Panc1 (cell line): ENCODE measurements at regions of chr1 and their contacts with region 1.

Region 1: GRCh38 chr1:61453111-61453961 is 271.6 kb downstream of the TM2D1 start:
- DNase-seq: peak; percentile 50
- ATAC-seq: peak; percentile 98
- H3K4me3 ChIP-seq: peak overlapping the region in 1 of 2 experiments; percentile 7; a peak in 1 of 4 replicates
- H3K27ac ChIP-seq: peak overlapping the region; percentile 31; the same call in 1 of the 2 replicates
- H3K4me1 ChIP-seq: peaks cover 11% of the 10 kb centered on the region
- H3K27me3 ChIP-seq: no peaks in the 10 kb centered on the region
- CTCF ChIP-seq: peak; percentile 88

Region 2: DNA sequence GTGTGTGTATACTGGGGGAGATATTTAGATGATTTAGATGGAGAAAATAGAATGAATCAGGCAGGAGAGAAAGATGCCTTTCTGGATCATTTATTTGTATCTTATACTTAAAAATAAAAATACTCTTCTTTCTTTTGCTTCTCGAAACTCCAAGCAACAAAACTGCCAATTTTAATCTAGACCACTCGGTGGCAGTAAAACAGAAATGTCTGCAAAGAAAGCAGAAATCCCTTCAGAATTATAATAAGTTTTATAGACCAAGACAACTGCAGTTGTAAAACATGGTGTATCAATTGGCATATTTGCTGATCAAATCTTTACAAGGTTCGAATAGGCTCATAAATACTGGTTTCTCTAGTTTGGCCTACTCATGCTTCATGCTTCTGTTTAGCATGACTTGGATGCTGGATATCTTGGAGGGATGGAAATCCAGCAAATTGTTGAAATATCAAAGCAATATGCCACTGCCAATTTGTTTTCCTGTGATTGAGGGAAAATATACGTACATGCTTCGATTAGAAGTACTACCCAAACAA is 1364.6 kb before region 1 on chr1:
- CTCF ChIA-PET with region 1: no interaction called
- POLR2A ChIA-PET with region 1: no interaction called
- in situ Hi-C with region 1: no loop called
- intact Hi-C with region 1: no loop called
- DNase-seq: no peak
- ATAC-seq: no peak
- H3K4me3 ChIP-seq: no peak overlapping the region
- H3K27ac ChIP-seq: no peak overlapping the region
- H3K4me1 ChIP-seq: no peaks in the 10 kb centered on the region
- H3K27me3 ChIP-seq: no peaks in the 10 kb centered on the region
- CTCF ChIP-seq: no peak; the same call in 1 of the 2 replicates

Region 3: DNA sequence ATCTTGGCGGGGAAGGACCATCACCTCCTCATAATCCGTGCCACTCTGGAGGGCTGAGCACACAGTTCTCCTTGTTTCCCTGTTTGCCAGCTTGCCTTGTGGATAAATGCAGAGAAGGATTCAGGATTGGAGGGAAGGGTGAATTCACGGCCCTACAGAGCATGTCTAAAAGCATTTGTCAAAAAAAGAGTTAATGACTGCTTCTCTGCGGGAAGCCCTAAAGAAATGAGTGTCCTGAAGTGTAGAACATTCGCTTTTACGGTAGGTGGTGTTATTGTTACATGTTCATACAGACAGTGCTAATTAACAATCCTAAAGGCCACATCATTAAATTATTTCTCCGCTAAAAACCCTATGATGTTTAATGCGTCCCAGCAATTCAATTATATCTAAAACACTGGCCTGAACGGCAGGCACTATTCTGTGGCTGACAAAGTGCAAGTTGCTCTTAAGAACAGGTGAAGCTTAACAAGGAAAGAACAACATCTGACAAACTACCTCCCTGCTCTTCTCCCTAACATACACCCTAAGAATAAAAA is 483.3 kb before region 1 on chr1:
- CTCF ChIA-PET with region 1: no interaction called
- POLR2A ChIA-PET with region 1: no interaction called
- in situ Hi-C with region 1: no loop called
- intact Hi-C with region 1: loop called (anchors 5 kb)
- DNase-seq: peak; percentile 15
- ATAC-seq: peak; percentile 74; the same call in 1 of the 2 replicates
- H3K4me3 ChIP-seq: no peak overlapping the region
- H3K27ac ChIP-seq: no peak overlapping the region
- H3K4me1 ChIP-seq: no peaks in the 10 kb centered on the region; the same call in 1 of the 2 replicates
- H3K27me3 ChIP-seq: peaks cover 6% of the 10 kb centered on the region; the same call in 1 of the 2 replicates
- CTCF ChIP-seq: peak; percentile 51; the same call in 1 of the 2 replicates

Region 4: GRCh38 chr1:61049850-61050540 is 403.3 kb before region 1 on chr1:
- CTCF ChIA-PET with region 1: interaction called, 3 read pairs
- POLR2A ChIA-PET with region 1: no interaction called
- in situ Hi-C with region 1: no loop called
- intact Hi-C with region 1: loop called (anchors 10 kb)
- DNase-seq: peak; percentile 75
- ATAC-seq: peak; percentile 87
- H3K4me3 ChIP-seq: peak overlapping the region; percentile 70 to 76
- H3K27ac ChIP-seq: peak overlapping the region; percentile 77
- H3K4me1 ChIP-seq: peaks cover 25% of the 10 kb centered on the region
- H3K27me3 ChIP-seq: no peaks in the 10 kb centered on the region
- CTCF ChIP-seq: peak; percentile 96

Region 5: GRCh38 chr1:61337981-61338848 is 115.1 kb before region 1 on chr1:
- CTCF ChIA-PET with region 1: no interaction called
- POLR2A ChIA-PET with region 1: no interaction called
- in situ Hi-C with region 1: no loop called
- intact Hi-C with region 1: loop called (anchors 5 kb)
- DNase-seq: no peak
- ATAC-seq: peak; percentile 99
- H3K4me3 ChIP-seq: peak overlapping the region in 1 of 2 experiments; percentile 26; a peak in 1 of 4 replicates
- H3K27ac ChIP-seq: peak overlapping the region; percentile 72
- H3K4me1 ChIP-seq: peaks cover 19% of the 10 kb centered on the region
- H3K27me3 ChIP-seq: no peaks in the 10 kb centered on the region
- CTCF ChIP-seq: peak; percentile 89

Region 6: DNA sequence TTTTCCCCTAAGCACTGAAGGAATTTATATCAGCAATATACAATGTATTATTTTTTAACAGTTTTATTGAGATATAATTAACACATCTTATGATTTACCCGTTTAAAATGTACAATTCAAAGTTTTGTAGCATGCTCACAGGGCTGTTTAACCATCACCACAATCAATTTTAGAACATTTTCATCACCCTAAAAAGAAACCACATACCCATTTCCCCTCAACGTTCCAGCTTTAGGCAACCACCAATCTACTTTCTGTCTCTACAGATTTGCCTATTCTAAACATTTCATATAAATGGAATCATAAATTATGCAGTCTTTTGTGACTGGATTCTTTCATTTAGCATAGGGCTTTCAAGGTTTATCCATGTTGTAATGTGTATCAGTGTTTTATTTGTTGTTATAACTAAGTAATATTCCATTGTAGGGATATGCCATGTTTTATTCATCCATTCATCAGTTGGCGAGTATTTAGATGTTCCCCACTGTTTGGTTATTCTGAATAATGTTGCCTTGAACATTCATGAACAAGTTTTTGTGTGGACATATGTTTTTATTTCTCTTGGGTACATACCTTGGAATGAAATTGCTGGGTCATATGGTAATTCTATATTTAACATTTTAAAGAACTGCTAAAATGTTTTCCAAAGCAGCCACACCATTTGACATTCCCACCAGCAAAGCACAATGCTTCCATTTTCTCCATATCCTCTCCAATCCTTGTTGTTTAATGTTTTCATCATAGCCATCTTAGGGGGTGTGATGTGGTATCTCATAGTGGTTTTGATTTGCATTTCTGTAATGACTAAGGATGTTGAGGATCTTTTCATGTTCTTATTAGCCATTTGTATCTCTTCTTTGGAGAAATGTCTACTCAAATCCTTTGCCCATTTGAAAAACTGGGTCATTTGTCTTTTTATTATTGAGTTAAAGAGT is 83.1 kb after region 1 on chr1:
- CTCF ChIA-PET with region 1: interaction called, 15 read pairs
- POLR2A ChIA-PET with region 1: no interaction called
- in situ Hi-C with region 1: no loop called
- intact Hi-C with region 1: no loop called
- DNase-seq: no peak
- ATAC-seq: no peak
- H3K4me3 ChIP-seq: no peak overlapping the region
- H3K27ac ChIP-seq: no peak overlapping the region
- H3K4me1 ChIP-seq: no peaks in the 10 kb centered on the region
- H3K27me3 ChIP-seq: peaks cover 2% of the 10 kb centered on the region; the same call in 1 of the 2 replicates
- CTCF ChIP-seq: no peak